H1 (cell line): ENCODE measurements at regions of chr9 and their contacts with region 1.

Region 1: GRCh38 chr9:137445275-137445807 is 4.2 kb upstream of the ENTPD8 start:
- DNase-seq: peak in 1 of 2 experiments; percentile 97
- H3K4me3 ChIP-seq: no peak overlapping the region
- H3K27ac ChIP-seq: no peak overlapping the region
- H3K4me1 ChIP-seq: peaks cover 0 to 3% (median under 1%) of the 10 kb centered on the region in 4 experiments; a peak in 3 of 7 replicates
- H3K27me3 ChIP-seq: no peaks in the 10 kb centered on the region
- CTCF ChIP-seq: peak in 2 of 3 experiments; percentile 77 to 89; a peak in 3 of 4 replicates
- EP300 ChIP-seq: no peak
- POLR2A ChIP-seq: no peak
- RAD21 ChIP-seq: peak; percentile 56 to 72

Region 2: DNA sequence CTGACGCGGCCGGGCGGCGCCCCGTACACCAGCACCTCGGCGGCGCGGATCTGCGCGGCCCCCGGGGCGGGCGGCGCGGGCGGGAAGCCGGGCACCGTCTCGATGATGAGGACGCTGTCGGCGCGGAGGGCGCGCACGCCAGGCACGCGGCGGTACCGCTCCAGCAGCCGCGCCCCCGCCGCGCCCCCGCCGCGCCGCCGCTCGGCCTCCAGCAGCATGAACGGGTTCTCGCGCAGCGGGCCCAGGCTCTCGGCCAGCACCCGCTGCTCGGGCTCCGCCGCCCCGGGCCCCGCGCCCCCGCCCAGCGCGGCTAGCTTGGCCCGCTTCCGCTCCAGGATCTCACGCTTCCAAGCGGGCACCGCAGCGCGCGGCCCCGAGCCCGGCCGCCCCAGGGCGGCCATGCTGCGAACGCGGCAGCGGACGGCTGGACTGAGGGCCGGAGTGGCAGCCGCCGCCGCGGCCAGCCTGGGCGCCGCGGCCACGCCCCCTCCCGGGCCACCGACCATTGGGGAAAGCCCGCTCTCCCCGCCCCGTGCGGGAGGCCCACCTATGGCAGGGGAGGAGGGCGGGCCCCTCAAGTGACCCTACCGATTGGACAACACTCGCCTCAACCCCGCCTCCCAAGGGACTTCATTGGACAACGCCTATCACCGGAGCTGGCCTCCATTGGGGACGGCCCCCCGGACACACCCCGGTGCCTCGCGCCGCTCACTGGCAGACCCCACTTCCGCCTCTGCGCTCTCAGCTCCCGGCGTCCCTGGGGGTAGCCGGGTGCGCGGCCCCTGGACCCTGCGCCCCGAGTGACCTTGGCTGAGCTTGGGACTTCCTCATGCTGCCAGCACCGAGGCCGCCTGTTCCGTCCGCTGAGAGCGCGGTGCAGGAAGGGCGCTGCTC is 244.8 kb before region 1 on chr9 and contains the start of gene TPRN:
- CTCF ChIA-PET with region 1: no interaction called
- POLR2A ChIA-PET with region 1: no interaction called
- DNase-seq: peak; percentile 96 to 97
- H3K4me3 ChIP-seq: peak within 1 kb of the TSS; percentile 64 to 78 (median 69)
- H3K27ac ChIP-seq: no peak within 1 kb of the TSS; the same call in 1 of the 2 replicates
- H3K4me1 ChIP-seq: peaks cover 8 to 28% (median 18%) of the 10 kb centered on the region in 4 experiments
- H3K27me3 ChIP-seq: no peaks in the 10 kb centered on the region
- CTCF ChIP-seq: no peak
- EP300 ChIP-seq: no peak
- POLR2A ChIP-seq: peak in 1 of 2 experiments; percentile 88; a peak in 2 of 3 replicates
- RAD21 ChIP-seq: no peak
- total RNA-seq, gene TPRN: 23.2 and 27.2 TPM in 2 replicates

Region 3: DNA sequence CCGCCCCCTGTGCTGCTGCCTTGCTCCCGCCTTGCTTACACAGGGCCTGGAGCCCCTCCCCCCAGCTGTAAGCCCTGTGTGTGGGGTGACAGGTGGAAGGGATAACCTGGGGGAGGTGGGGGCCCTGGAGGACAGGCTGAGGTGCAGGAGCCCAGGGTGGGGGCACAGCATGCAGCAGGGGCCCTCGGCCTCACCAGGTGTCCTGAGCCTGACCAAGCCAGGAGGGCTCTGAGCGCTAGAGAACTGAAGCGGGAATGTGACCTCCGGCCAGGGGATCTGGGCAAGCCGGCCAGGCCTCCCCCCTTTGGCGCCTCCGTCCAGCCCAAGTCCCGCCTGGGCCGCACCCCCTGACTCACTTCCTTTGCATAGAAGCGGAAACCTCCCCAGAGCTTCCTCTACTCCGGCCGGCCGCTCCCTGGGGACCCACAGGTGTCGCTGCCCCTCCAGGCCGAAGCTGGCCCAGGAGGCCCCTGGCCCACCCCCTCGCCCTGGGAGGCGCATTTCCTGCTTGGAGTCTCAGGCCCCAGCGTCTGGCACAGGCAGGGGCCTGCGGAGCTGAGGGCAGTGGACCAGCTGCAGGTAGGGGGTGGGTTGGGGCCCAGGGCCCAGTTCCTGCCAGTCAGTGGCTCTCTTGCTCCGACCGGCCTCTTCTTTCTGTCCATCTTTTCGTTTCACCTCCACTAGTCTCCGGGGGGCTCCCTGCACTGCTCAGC is 167.9 kb before region 1 on chr9 and contains the start of gene TOR4A:
- CTCF ChIA-PET with region 1: interaction called, 19 read pairs
- POLR2A ChIA-PET with region 1: no interaction called
- DNase-seq: peak in 1 of 2 experiments; percentile 86
- H3K4me3 ChIP-seq: peak within 1 kb of the TSS; percentile 26 to 70 (median 58)
- H3K27ac ChIP-seq: peak within 1 kb of the TSS; percentile 28; the same call in 1 of the 2 replicates
- H3K4me1 ChIP-seq: peaks cover 0 to 28% (median 19%) of the 10 kb centered on the region in 4 experiments; a peak in 6 of 7 replicates
- H3K27me3 ChIP-seq: peaks cover 2 to 27% (median 14%) of the 10 kb centered on the region in 4 experiments; a peak in 6 of 7 replicates
- CTCF ChIP-seq: peak in 1 of 3 experiments; percentile 21; a peak in 1 of 4 replicates
- EP300 ChIP-seq: no peak
- POLR2A ChIP-seq: peak in 1 of 2 experiments; percentile 41; a peak in 1 of 3 replicates
- RAD21 ChIP-seq: peak in 1 of 2 experiments; percentile 6; a peak in 1 of 4 replicates
- total RNA-seq, gene TOR4A: 9.2 and 9.3 TPM in 2 replicates

Region 4: DNA sequence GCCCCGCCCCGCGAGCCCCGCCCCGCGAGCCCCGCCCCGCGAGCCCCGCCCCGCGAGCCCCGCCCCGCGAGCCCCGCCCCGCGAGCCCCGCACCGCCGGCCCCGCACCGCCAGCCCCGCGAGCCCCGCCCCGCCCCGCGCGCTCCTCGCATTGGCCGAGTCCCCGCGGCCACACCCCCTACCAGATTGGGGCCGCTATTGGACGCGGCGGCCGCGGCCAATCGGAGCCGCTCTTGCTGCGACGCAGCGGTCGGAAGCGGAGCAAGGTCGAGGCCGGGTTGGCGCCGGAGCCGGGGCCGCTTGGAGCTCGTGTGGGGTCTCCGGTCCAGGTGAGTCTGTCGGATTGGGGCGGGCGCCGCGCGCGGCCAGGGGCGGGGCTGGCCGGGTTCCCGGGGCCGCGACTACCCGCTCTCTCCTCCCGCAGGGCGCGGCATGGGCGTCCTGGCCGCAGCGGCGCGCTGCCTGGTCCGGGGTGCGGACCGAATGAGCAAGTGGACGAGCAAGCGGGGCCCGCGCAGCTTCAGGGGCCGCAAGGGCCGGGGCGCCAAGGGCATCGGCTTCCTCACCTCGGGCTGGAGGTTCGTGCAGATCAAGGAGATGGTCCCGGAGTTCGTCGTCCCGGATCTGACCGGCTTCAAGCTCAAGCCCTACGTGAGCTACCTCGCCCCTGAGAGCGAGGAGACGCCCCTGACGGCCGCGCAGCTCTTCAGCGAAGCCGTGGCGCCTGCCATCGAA is 106.5 kb after region 1 on chr9 and contains the start of gene MRPL41:
- CTCF ChIA-PET with region 1: no interaction called
- POLR2A ChIA-PET with region 1: no interaction called
- DNase-seq: peak; percentile 70 to 93
- H3K4me3 ChIP-seq: peak within 1 kb of the TSS; percentile 63 to 79 (median 78)
- H3K27ac ChIP-seq: peak within 1 kb of the TSS; percentile 53; the same call in 1 of the 2 replicates
- H3K4me1 ChIP-seq: peaks cover 0 to 7% (median 1%) of the 10 kb centered on the region in 4 experiments; a peak in 3 of 7 replicates
- H3K27me3 ChIP-seq: no peaks in the 10 kb centered on the region
- CTCF ChIP-seq: no peak
- EP300 ChIP-seq: no peak
- POLR2A ChIP-seq: peak in 1 of 2 experiments; percentile 67; a peak in 2 of 3 replicates
- RAD21 ChIP-seq: no peak
- total RNA-seq, gene MRPL41: 47.2 and 49.4 TPM in 2 replicates

Region 5: DNA sequence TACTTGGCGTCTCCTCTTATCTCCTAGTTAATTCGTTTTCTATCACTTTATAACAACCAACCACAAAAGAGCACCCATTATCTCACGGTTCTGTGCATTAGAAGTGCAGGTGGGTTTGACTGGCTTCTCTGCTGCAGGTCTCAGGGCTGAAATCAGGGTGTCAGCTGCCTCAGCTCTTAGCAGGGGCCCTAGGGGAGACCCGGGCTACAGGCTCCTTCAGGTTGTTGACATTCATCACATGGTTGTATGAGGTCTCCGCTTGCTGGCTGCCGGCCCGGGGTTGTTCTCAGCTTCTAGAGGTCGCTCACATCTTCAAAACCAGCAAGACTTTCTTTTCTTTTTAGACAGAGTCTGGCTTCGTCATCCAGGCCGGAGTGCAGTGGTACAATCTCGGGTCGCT is 147.8 kb after region 1 on chr9:
- CTCF ChIA-PET with region 1: no interaction called
- POLR2A ChIA-PET with region 1: no interaction called
- DNase-seq: no peak
- H3K4me3 ChIP-seq: no peak overlapping the region
- H3K27ac ChIP-seq: no peak overlapping the region
- H3K4me1 ChIP-seq: peaks cover 0 to 7% (median 5%) of the 10 kb centered on the region in 4 experiments; a peak in 5 of 7 replicates
- H3K27me3 ChIP-seq: no peaks in the 10 kb centered on the region; a peak in 1 of 7 replicates
- CTCF ChIP-seq: no peak
- EP300 ChIP-seq: no peak
- POLR2A ChIP-seq: no peak
- RAD21 ChIP-seq: no peak